ENCODE measurements at regions of chr6 and their contacts with region 1.

Region 1: DNA sequence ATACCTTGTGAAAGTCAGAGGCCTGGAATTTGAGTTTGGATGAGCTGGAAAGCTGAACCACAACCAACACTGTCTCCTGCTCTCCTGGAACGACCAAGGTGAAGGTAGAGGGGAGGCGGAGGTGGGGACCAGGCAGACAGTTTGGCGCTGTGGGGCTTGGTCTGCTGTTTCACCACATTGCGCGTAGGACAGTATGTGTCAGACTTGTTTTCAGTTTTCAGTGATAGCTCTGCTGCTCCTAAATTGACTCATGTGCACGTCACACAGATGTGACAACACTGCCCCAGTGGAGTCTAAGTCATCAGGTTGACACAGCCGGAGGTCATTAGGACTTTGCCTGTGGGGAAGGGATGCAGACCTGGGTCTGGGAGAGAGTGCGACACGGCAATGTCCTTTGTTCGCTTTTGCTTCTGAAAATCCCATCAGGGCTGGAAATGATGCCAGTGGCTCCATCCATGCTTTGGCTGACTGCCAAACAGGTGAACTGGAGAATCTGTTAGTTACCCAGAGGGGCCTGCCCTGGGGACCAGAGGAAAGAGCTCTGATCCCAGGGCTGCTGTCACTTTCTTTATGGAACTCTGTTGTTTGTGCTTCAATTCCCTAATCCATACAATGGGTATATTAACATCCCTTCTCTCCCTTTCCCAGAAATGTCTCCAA is 255.5 kb downstream of the CDC5L start:
- DNase-seq: no peak
- H3K4me3 ChIP-seq: no peak overlapping the region
- H3K27ac ChIP-seq: no peak overlapping the region
- H3K4me1 ChIP-seq: no peaks in the 10 kb centered on the region; a peak in 1 of 4 replicates
- H3K27me3 ChIP-seq: no peaks in the 10 kb centered on the region
- CTCF ChIP-seq: no peak
- EP300 ChIP-seq: no peak
- RAD21 ChIP-seq: no peak

Region 2: GRCh38 chr6:44439270-44440045 is 203.5 kb before region 1 on chr6:
- CTCF ChIA-PET with region 1: no interaction called
- POLR2A ChIA-PET with region 1: no interaction called
- DNase-seq: no peak
- H3K4me3 ChIP-seq: no peak overlapping the region
- H3K27ac ChIP-seq: peak overlapping the region in 1 of 2 experiments; percentile 11; a peak in 1 of 4 replicates
- H3K4me1 ChIP-seq: no peaks in the 10 kb centered on the region; a peak in 2 of 4 replicates
- H3K27me3 ChIP-seq: no peaks in the 10 kb centered on the region
- CTCF ChIP-seq: no peak
- EP300 ChIP-seq: no peak
- RAD21 ChIP-seq: no peak

Region 3: GRCh38 chr6:44630125-44631028 is 12.6 kb before region 1 on chr6:
- CTCF ChIA-PET with region 1: interaction called, 17 read pairs
- POLR2A ChIA-PET with region 1: no interaction called
- DNase-seq: peak; percentile 76
- H3K4me3 ChIP-seq: no peak overlapping the region
- H3K27ac ChIP-seq: no peak overlapping the region
- H3K4me1 ChIP-seq: no peaks in the 10 kb centered on the region
- H3K27me3 ChIP-seq: no peaks in the 10 kb centered on the region
- CTCF ChIP-seq: peak; percentile 78
- EP300 ChIP-seq: no peak
- RAD21 ChIP-seq: peak; percentile 77

Region 4: GRCh38 chr6:44704240-44705150 is 61.5 kb after region 1 on chr6:
- CTCF ChIA-PET with region 1: no interaction called
- POLR2A ChIA-PET with region 1: no interaction called
- DNase-seq: no peak
- H3K4me3 ChIP-seq: no peak overlapping the region
- H3K27ac ChIP-seq: no peak overlapping the region
- H3K4me1 ChIP-seq: no peaks in the 10 kb centered on the region; a peak in 1 of 4 replicates
- H3K27me3 ChIP-seq: no peaks in the 10 kb centered on the region
- CTCF ChIP-seq: no peak
- EP300 ChIP-seq: no peak
- RAD21 ChIP-seq: no peak

Region 5: GRCh38 chr6:44906761-44907160 is 263.8 kb after region 1 on chr6:
- CTCF ChIA-PET with region 1: no interaction called
- POLR2A ChIA-PET with region 1: no interaction called
- DNase-seq: no peak
- H3K4me3 ChIP-seq: no peak overlapping the region
- H3K27ac ChIP-seq: no peak overlapping the region
- H3K4me1 ChIP-seq: no peaks in the 10 kb centered on the region
- H3K27me3 ChIP-seq: no peaks in the 10 kb centered on the region
- CTCF ChIP-seq: no peak
- EP300 ChIP-seq: no peak
- RAD21 ChIP-seq: no peak